Mammary epithelial cell (primary cell): ENCODE measurements at regions of chr6 and their contacts with region 1.

Region 1: DNA sequence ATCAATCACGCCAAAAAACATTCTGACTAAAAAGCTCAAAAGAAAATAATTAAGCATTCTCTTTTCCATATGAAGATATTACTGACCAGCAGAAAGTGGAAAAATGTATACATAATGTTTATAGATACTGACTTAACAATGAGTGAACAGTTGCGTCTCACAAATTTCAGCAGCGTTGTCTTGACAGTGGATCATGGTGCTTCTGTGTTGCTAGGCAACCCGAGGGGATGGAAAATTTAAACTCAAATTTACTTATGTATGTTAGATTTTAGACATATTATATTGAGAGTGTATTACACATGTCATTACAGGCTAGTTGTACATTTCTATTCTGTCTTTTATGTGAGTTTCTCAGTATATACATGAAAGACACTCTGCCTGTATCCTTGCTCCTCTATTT is 110.2 kb downstream of the LAMA2 start:
- DNase-seq: no peak
- H3K4me3 ChIP-seq: no peak overlapping the region
- H3K27ac ChIP-seq: no peak overlapping the region
- H3K4me1 ChIP-seq: no peaks in the 10 kb centered on the region
- H3K27me3 ChIP-seq: peaks cover 5% of the 10 kb centered on the region
- CTCF ChIP-seq: no peak

Region 2: GRCh38 chr6:129050086-129050485 is 56.9 kb after region 1 on chr6:
- CTCF ChIA-PET with region 1: no interaction called
- dilution Hi-C with region 1: no loop called
- in situ Hi-C with region 1: no loop called
- intact Hi-C with region 1: no loop called
- DNase-seq: peak; percentile 8
- H3K4me3 ChIP-seq: no peak overlapping the region
- H3K27ac ChIP-seq: no peak overlapping the region
- H3K4me1 ChIP-seq: no peaks in the 10 kb centered on the region
- H3K27me3 ChIP-seq: no peaks in the 10 kb centered on the region
- CTCF ChIP-seq: no peak

Region 3: DNA sequence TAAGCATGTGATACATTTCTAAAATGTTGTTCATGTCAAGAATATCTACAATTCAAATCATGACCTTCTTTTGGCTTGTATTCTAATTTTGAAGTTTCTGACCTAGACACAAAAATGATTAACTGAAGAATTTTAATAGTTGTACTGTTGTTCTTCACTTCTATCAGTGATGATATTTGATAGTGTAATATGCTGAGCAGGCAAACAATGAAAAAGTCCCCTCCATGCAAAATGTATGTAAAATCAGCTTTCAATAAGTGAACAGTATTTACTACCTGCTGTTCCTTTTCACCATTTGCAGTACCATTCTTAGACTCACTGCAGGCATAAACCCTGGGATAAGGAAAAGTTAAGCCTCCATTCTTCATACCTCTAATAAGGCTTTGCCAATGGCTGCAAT is 91.2 kb after region 1 on chr6:
- CTCF ChIA-PET with region 1: no interaction called
- dilution Hi-C with region 1: no loop called
- in situ Hi-C with region 1: no loop called
- intact Hi-C with region 1: no loop called
- DNase-seq: no peak
- H3K4me3 ChIP-seq: no peak overlapping the region
- H3K27ac ChIP-seq: no peak overlapping the region
- H3K4me1 ChIP-seq: no peaks in the 10 kb centered on the region
- H3K27me3 ChIP-seq: peaks cover 9% of the 10 kb centered on the region
- CTCF ChIP-seq: no peak

Region 4: DNA sequence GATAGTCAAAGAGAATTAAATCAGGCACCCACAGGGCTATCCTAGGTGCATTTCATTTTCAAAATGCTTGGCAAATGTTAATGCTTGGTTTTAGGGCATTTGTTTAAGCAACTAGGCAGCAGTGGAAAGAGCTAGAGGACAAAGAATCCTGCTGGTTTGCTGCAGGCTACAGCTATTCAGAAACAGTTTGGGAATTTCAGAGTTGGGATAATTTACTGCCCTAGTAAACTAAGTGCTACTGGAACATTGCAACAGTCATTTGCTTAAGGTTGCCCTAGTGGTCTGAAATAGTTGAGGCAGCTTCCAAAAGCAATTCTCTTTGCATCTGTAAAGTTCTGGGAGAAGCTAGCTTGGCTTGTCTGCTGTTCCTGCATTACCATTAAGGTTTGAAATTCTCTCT is 202.5 kb after region 1 on chr6:
- CTCF ChIA-PET with region 1: no interaction called
- dilution Hi-C with region 1: no loop called
- in situ Hi-C with region 1: no loop called
- intact Hi-C with region 1: loop called (anchors 10 kb)
- DNase-seq: no peak
- H3K4me3 ChIP-seq: no peak overlapping the region
- H3K27ac ChIP-seq: no peak overlapping the region
- H3K4me1 ChIP-seq: no peaks in the 10 kb centered on the region
- H3K27me3 ChIP-seq: no peaks in the 10 kb centered on the region
- CTCF ChIP-seq: no peak